Mucosa of descending colon (tissue), 3 donors: ENCODE measurements at regions of chr1 and their contacts with region 1.

Region 1: DNA sequence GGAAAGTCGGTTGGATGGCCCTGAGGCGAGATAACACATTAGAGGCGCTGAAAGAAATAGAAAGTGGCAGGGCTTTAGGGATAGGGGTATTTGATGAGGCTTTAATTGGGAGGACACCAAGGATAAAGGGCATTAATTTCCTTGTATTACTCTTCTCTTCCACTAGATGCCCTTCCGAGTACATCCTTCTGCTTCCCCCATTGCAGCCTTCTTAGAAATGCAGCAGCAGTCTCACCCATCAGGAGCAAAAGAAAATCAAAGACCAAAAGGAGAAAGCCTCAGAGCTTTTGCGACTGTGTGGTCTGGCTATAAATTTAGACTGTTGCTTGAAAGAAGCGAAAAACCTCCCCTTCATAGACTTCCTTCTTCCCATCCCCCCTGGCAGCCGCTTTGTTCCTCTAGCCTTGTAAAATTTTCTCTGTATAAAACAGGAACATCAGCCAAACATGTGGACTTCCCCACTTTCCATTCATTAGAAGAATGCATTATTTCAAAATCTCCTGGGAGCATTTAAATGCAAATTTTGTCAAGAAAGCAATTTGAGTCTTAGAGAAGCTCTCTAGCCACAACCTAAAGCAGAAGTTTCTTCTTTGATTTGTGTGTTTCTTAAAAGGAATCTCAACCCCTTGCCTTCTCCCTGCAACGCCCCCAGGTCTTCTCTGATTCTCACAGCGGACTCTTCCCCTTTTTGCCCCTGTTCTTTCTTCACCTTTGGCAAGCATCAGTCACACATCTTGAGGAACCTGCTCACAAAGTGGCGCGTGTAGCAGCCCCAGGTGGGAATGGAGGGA is 76.6 kb downstream of the NDUFS5 start:
- DNase-seq: peak in 1 of 3 donors; percentile 48
- ATAC-seq: peak; percentile 31
- H3K4me3 ChIP-seq: no peak overlapping the region
- H3K4me1 ChIP-seq: peaks cover 18% of the 10 kb centered on the region
- CTCF ChIP-seq: peak; percentile 39

Region 2: GRCh38 chr1:39142401-39143151 is 39.8 kb after region 1 on chr1:
- intact Hi-C with region 1: no loop called
- DNase-seq: no peak
- ATAC-seq: peak; percentile 72
- H3K4me3 ChIP-seq: no peak overlapping the region
- H3K4me1 ChIP-seq: no peaks in the 10 kb centered on the region
- CTCF ChIP-seq: no peak

Region 3: DNA sequence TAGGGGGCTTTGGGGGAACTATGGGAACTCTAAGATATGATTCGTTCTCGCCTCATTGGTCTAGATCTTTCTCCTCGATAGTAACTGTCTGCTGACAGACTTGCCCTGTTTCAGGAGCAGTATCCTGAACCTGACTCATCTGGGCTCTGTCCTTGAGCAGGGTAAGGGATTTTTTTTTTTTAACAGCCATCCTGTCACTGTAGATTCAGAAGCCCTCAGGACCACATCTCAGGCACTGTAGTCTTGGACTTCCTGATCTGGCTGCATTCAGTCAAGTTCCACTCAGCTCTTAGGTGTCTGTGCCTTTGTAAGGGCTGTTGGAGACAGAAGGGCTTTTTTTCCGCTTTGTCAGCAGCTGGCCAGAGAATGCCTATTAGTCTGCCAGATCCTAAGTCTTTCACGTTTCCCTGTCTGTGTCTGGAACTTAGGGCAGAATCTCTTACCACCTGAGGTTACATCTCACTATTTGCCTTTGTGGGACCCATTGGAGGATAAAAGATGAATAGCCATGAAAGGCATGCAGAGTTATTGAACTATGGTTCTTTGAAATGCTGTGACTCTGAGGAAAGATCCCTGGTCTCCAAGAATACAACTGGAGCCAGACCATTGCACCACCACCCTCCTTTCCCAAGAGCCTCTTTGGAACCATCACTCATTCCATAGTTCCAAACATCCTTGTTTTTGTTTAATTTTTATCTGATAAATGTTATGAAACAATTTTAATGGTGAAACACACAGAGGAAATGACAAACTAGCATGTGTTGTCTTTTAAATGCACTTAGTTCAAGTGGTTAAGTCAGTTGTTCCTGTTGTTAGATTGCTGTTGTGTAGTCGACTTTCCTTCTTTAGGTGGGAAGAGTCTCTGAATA is 52.1 kb after region 1 on chr1:
- intact Hi-C with region 1: no loop called
- DNase-seq: peak in 1 of 3 donors; percentile 18
- ATAC-seq: no peak
- H3K4me3 ChIP-seq: no peak overlapping the region
- H3K4me1 ChIP-seq: peaks cover 20% of the 10 kb centered on the region
- CTCF ChIP-seq: no peak

Region 4: GRCh38 chr1:39189592-39190041 is 86.9 kb after region 1 on chr1:
- intact Hi-C with region 1: loop called in 1 of 2 experiments (anchors 5 kb)
- DNase-seq: no peak
- ATAC-seq: no peak
- H3K4me3 ChIP-seq: no peak overlapping the region
- H3K4me1 ChIP-seq: peaks cover 4% of the 10 kb centered on the region
- CTCF ChIP-seq: no peak

Region 5: DNA sequence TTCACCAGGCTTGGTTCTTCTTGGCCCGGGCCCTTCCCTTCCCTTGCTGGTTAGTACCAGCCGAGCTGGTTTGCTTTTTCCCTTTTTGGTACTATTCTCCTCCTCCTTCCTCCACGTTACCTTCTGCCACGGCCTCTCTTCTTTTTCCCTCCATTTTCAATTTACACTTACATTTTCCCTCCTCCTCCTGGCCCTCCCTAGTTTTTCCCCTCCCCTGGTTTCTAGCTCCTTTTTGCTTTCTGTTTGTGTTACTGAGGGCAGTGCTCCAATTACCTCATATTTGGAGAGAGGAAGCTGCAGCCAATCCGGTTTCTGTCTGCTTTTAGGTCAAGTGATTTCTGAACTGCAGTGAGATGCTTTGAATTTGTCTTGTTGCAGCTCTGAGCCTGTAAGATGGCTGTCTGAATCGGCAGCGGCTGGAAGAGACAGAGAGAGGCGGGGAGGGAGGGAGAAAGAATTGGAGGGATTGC is 165.4 kb after region 1 on chr1:
- intact Hi-C with region 1: loop called in 1 of 2 experiments (anchors 10 kb)
- DNase-seq: peak in 1 of 3 donors; percentile 37
- ATAC-seq: peak; percentile 46
- H3K4me3 ChIP-seq: no peak overlapping the region
- H3K4me1 ChIP-seq: peaks cover 12% of the 10 kb centered on the region
- CTCF ChIP-seq: no peak

Region 6: GRCh38 chr1:39332291-39332690 is 229.6 kb after region 1 on chr1:
- intact Hi-C with region 1: no loop called
- DNase-seq: no peak
- ATAC-seq: no peak
- H3K4me3 ChIP-seq: no peak overlapping the region
- H3K4me1 ChIP-seq: no peaks in the 10 kb centered on the region
- CTCF ChIP-seq: no peak

Region 7: GRCh38 chr1:39491146-39491921 is 388.6 kb after region 1 on chr1 and contains the start of gene BMP8A:
- intact Hi-C with region 1: no loop called
- DNase-seq: peak; percentile 72 to 85 (median 79)
- ATAC-seq: peak; percentile 92
- H3K4me3 ChIP-seq: peak within 1 kb of the TSS; percentile 11
- H3K4me1 ChIP-seq: peaks cover 7% of the 10 kb centered on the region
- CTCF ChIP-seq: no peak
- total RNA-seq, gene BMP8A: 6.5 to 9.2 (median 8.2) TPM